Endothelial cell of umbilical vein (primary cell): ENCODE measurements at regions of chr5 and their contacts with region 1.

Region 1: GRCh38 chr5:56270568-56271392 is 37.6 kb upstream of the ANKRD55 start:
- DNase-seq: peak; percentile 90
- H3K4me3 ChIP-seq: no peak overlapping the region
- H3K27ac ChIP-seq: no peak overlapping the region
- H3K4me1 ChIP-seq: peaks cover 6% of the 10 kb centered on the region
- H3K27me3 ChIP-seq: no peaks in the 10 kb centered on the region
- CTCF ChIP-seq: peak; percentile 97
- POLR2A ChIP-seq: no peak

Region 2: GRCh38 chr5:55982957-55983381 is 287.8 kb before region 1 on chr5:
- CTCF ChIA-PET with region 1: interaction called, 3 read pairs
- POLR2A ChIA-PET with region 1: no interaction called
- dilution Hi-C with region 1: no loop called
- intact Hi-C with region 1: loop called (anchors 2 kb)
- DNase-seq: no peak
- H3K4me3 ChIP-seq: no peak overlapping the region
- H3K27ac ChIP-seq: no peak overlapping the region
- H3K4me1 ChIP-seq: peaks cover 3% of the 10 kb centered on the region
- H3K27me3 ChIP-seq: no peaks in the 10 kb centered on the region
- CTCF ChIP-seq: peak in 1 of 2 donors; percentile 12
- POLR2A ChIP-seq: no peak

Region 3: GRCh38 chr5:56088967-56089829 is 181.6 kb before region 1 on chr5:
- CTCF ChIA-PET with region 1: no interaction called
- POLR2A ChIA-PET with region 1: no interaction called
- dilution Hi-C with region 1: no loop called
- intact Hi-C with region 1: no loop called
- DNase-seq: no peak
- H3K4me3 ChIP-seq: no peak overlapping the region
- H3K27ac ChIP-seq: no peak overlapping the region
- H3K4me1 ChIP-seq: peaks cover 15% of the 10 kb centered on the region
- H3K27me3 ChIP-seq: no peaks in the 10 kb centered on the region
- CTCF ChIP-seq: no peak
- POLR2A ChIP-seq: no peak

Region 4: DNA sequence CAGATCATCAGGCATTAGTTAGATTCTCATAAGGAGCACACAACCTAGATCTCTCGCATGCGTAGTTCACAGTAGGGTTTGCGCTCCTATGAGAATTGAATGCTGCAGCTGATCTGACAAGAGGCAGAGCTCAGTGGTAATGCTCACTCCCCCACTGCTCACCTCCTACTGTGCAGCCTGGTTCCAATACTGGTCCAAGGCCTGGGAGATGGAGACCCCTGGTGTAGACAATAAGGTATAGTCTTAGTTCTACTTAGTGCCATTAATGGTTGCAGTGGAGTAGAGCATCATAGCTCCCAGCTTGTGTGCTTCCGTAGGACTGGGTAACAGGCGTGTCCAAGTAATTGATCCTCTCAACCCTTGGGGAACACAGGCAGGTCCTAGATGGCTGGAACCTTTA is 32.7 kb after region 1 on chr5:
- CTCF ChIA-PET with region 1: interaction called, 34 read pairs
- POLR2A ChIA-PET with region 1: no interaction called
- dilution Hi-C with region 1: no loop called
- intact Hi-C with region 1: no loop called
- DNase-seq: peak; percentile 11
- H3K4me3 ChIP-seq: no peak overlapping the region
- H3K27ac ChIP-seq: no peak overlapping the region
- H3K4me1 ChIP-seq: peaks cover 11% of the 10 kb centered on the region
- H3K27me3 ChIP-seq: no peaks in the 10 kb centered on the region
- CTCF ChIP-seq: no peak
- POLR2A ChIP-seq: no peak

Region 5: GRCh38 chr5:56481428-56482357 is 210.9 kb after region 1 on chr5:
- CTCF ChIA-PET with region 1: no interaction called
- POLR2A ChIA-PET with region 1: no interaction called
- dilution Hi-C with region 1: no loop called
- intact Hi-C with region 1: loop called (anchors 1 kb)
- DNase-seq: peak; percentile 53
- H3K4me3 ChIP-seq: peak overlapping the region; percentile 44 to 88 (median 87)
- H3K27ac ChIP-seq: peak overlapping the region; percentile 32
- H3K4me1 ChIP-seq: peaks cover 12% of the 10 kb centered on the region
- H3K27me3 ChIP-seq: no peaks in the 10 kb centered on the region
- CTCF ChIP-seq: peak; percentile 16 to 63
- POLR2A ChIP-seq: no peak

Region 6: GRCh38 chr5:56814963-56815658 is 544.3 kb after region 1 on chr5 and contains the start of gene MAP3K1:
- CTCF ChIA-PET with region 1: interaction called, 7 read pairs
- POLR2A ChIA-PET with region 1: no interaction called
- dilution Hi-C with region 1: no loop called
- intact Hi-C with region 1: loop called (anchors 2 kb)
- DNase-seq: peak; percentile 71
- H3K4me3 ChIP-seq: peak within 1 kb of the TSS; percentile 83 to 94 (median 85)
- H3K27ac ChIP-seq: peak within 1 kb of the TSS; percentile 47
- H3K4me1 ChIP-seq: peaks cover 19% of the 10 kb centered on the region
- H3K27me3 ChIP-seq: peaks cover 0 to 3% of the 10 kb centered on the region in 2 experiments
- CTCF ChIP-seq: peak in 1 of 2 donors; percentile 1
- POLR2A ChIP-seq: no peak
- total RNA-seq, gene MAP3K1: 12.5 and 14.4 TPM in 2 replicates

Region 7: GRCh38 chr5:56900858-56901578 is 630.2 kb after region 1 on chr5:
- CTCF ChIA-PET with region 1: interaction called, 18 read pairs
- POLR2A ChIA-PET with region 1: no interaction called
- dilution Hi-C with region 1: no loop called
- intact Hi-C with region 1: loop called (anchors 1 kb)
- DNase-seq: peak; percentile 57
- H3K4me3 ChIP-seq: no peak overlapping the region
- H3K27ac ChIP-seq: no peak overlapping the region
- H3K4me1 ChIP-seq: peaks cover 5% of the 10 kb centered on the region
- H3K27me3 ChIP-seq: peaks cover 3 to 6% of the 10 kb centered on the region in 2 experiments
- CTCF ChIP-seq: peak; percentile 53 to 57
- POLR2A ChIP-seq: no peak

Region 8: GRCh38 chr5:57277085-57277484 is 1006.3 kb after region 1 on chr5:
- CTCF ChIA-PET with region 1: interaction called, 11 read pairs
- POLR2A ChIA-PET with region 1: no interaction called
- dilution Hi-C with region 1: no loop called
- intact Hi-C with region 1: loop called (anchors 2 kb)
- DNase-seq: peak; percentile 54
- H3K4me3 ChIP-seq: no peak overlapping the region
- H3K27ac ChIP-seq: no peak overlapping the region
- H3K4me1 ChIP-seq: no peaks in the 10 kb centered on the region
- H3K27me3 ChIP-seq: peaks cover 0 to 3% of the 10 kb centered on the region in 2 experiments
- CTCF ChIP-seq: peak; percentile 11 to 18
- POLR2A ChIP-seq: no peak